Panc1 (cell line): ENCODE measurements at regions of chr11 and their contacts with region 1.

Region 1: GRCh38 chr11:79396674-79397073 is 44.2 kb downstream of the TENM4 start:
- DNase-seq: no peak
- ATAC-seq: no peak
- H3K4me3 ChIP-seq: no peak overlapping the region
- H3K27ac ChIP-seq: no peak overlapping the region
- H3K4me1 ChIP-seq: no peaks in the 10 kb centered on the region
- H3K27me3 ChIP-seq: peaks cover 4% of the 10 kb centered on the region; the same call in 1 of the 2 replicates
- CTCF ChIP-seq: no peak

Region 2: GRCh38 chr11:79600711-79601110 is 204.0 kb after region 1 on chr11:
- CTCF ChIA-PET with region 1: interaction called, 12 read pairs
- POLR2A ChIA-PET with region 1: no interaction called
- in situ Hi-C with region 1: no loop called
- intact Hi-C with region 1: no loop called
- DNase-seq: no peak
- ATAC-seq: no peak
- H3K4me3 ChIP-seq: no peak overlapping the region
- H3K27ac ChIP-seq: no peak overlapping the region
- H3K4me1 ChIP-seq: no peaks in the 10 kb centered on the region
- H3K27me3 ChIP-seq: 0 out of 2 replicates have a peak, but pooled peaks cover 2% of the 10 kb centered on the region
- CTCF ChIP-seq: no peak

Region 3: DNA sequence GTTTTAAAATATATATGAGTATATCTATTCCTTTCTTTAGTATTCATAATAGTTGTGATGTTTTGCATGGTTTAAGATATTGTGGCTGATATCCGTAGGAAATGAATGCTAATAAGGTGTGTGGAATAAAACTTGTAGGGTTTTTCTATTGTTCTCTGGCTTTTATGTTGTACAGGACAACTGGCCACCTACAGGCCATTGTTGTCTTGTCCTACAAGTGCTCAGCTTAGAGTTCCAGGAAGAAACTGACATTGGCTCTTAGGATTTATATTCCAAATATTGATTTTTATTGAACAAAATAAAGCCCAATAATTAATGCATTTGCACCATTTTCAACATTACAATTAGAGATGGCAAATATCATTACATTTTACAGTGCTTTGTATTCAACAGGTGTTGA is 557.0 kb after region 1 on chr11:
- CTCF ChIA-PET with region 1: no interaction called
- POLR2A ChIA-PET with region 1: no interaction called
- in situ Hi-C with region 1: no loop called
- intact Hi-C with region 1: no loop called
- DNase-seq: no peak
- ATAC-seq: no peak
- H3K4me3 ChIP-seq: no peak overlapping the region
- H3K27ac ChIP-seq: no peak overlapping the region
- H3K4me1 ChIP-seq: no peaks in the 10 kb centered on the region
- H3K27me3 ChIP-seq: no peaks in the 10 kb centered on the region
- CTCF ChIP-seq: peak; percentile 16; the same call in 1 of the 2 replicates

Region 4: DNA sequence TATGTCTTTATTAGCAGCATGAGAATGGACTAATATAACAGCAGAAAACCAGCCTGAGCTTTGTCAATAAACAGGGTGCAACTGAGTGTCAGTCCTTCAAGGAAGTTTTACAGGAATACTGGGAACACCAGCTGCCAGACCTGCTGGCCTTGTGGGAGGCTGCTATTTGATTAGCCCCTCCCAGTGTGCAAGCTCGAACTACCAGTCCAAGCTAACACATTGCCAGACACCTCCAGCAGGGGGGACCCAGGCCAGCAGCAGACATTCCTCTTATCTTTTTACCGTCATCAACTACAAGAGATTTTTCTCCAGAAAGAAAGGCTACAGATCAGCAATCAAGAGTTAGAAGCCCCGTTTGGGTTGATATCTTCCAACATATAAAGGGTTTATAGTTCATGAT is 987.0 kb after region 1 on chr11:
- CTCF ChIA-PET with region 1: no interaction called
- POLR2A ChIA-PET with region 1: no interaction called
- in situ Hi-C with region 1: no loop called
- intact Hi-C with region 1: no loop called
- DNase-seq: no peak
- ATAC-seq: no peak
- H3K4me3 ChIP-seq: no peak overlapping the region
- H3K27ac ChIP-seq: no peak overlapping the region
- H3K4me1 ChIP-seq: no peaks in the 10 kb centered on the region
- H3K27me3 ChIP-seq: no peaks in the 10 kb centered on the region
- CTCF ChIP-seq: no peak